Endothelial cell of umbilical vein (primary cell): ENCODE measurements at regions of chr7 and their contacts with region 1.

Region 1: DNA sequence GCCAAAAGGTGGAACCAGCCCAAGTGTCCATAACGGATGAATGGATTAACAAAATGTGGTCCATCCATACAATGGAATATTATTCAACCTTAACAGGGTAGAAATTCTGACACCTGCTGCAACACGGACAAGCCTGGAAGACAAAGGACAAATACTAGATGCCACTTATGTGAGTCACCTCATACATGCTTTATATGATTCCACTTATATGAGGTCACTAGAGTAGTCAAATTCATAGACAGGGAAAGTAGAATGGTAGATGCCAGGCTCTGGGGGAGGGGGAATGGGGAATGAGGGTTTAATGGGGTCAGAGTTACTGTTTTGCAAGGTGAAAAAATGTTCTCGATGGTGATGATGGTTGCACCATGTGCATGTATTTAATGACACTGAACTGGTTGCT is 34.0 kb upstream of the CYTH3 start:
- DNase-seq: peak; percentile 26
- H3K4me3 ChIP-seq: no peak overlapping the region
- H3K27ac ChIP-seq: no peak overlapping the region
- H3K4me1 ChIP-seq: peaks cover 20% of the 10 kb centered on the region
- H3K27me3 ChIP-seq: no peaks in the 10 kb centered on the region
- CTCF ChIP-seq: no peak
- POLR2A ChIP-seq: no peak

Region 2: GRCh38 chr7:6283391-6284390 is 22.8 kb before region 1 on chr7:
- CTCF ChIA-PET with region 1: interaction called, 5 read pairs
- POLR2A ChIA-PET with region 1: no interaction called
- dilution Hi-C with region 1: no loop called
- intact Hi-C with region 1: loop called (anchors 2 kb)
- DNase-seq: no peak
- H3K4me3 ChIP-seq: no peak overlapping the region
- H3K27ac ChIP-seq: no peak overlapping the region
- H3K4me1 ChIP-seq: peaks cover 9% of the 10 kb centered on the region
- H3K27me3 ChIP-seq: no peaks in the 10 kb centered on the region
- CTCF ChIP-seq: no peak
- POLR2A ChIP-seq: no peak

Region 3: GRCh38 chr7:6338551-6339274 is 32.2 kb after region 1 on chr7:
- CTCF ChIA-PET with region 1: no interaction called
- POLR2A ChIA-PET with region 1: no interaction called
- dilution Hi-C with region 1: no loop called
- intact Hi-C with region 1: no loop called
- DNase-seq: no peak
- H3K4me3 ChIP-seq: no peak overlapping the region
- H3K27ac ChIP-seq: no peak overlapping the region
- H3K4me1 ChIP-seq: no peaks in the 10 kb centered on the region
- H3K27me3 ChIP-seq: no peaks in the 10 kb centered on the region
- CTCF ChIP-seq: no peak
- POLR2A ChIP-seq: no peak